Mammary epithelial cell (primary cell): ENCODE measurements at regions of chr2 and their contacts with region 1.

Region 1: GRCh38 chr2:112006076-112006410 is 49.0 kb upstream of the TMEM87B start:
- DNase-seq: peak; percentile 82
- H3K4me3 ChIP-seq: no peak overlapping the region
- H3K27ac ChIP-seq: no peak overlapping the region
- H3K4me1 ChIP-seq: peaks cover 5% of the 10 kb centered on the region
- H3K27me3 ChIP-seq: peaks cover 17% of the 10 kb centered on the region
- CTCF ChIP-seq: no peak

Region 2: DNA sequence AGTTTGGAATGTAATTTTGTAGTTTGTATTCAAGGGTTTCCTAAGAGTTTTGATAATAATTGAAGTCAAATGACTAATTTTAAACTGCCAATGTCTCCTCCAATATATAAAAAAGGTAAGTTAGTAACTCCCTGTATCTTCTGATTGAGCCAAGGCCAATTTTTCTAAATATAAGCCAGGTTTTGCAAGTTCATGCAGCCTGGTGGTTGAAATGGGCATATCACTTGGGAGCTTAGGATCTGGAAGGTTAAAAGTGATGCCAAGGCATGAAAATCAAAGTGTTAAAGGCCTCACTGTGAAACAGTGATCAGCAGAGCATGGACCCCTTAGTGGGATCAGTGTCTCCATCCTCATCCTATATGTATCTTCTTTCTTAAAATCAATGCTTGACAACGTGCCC is 47.1 kb before region 1 on chr2:
- CTCF ChIA-PET with region 1: no interaction called
- dilution Hi-C with region 1: no loop called
- in situ Hi-C with region 1: no loop called
- intact Hi-C with region 1: no loop called
- DNase-seq: no peak
- H3K4me3 ChIP-seq: no peak overlapping the region
- H3K27ac ChIP-seq: no peak overlapping the region
- H3K4me1 ChIP-seq: no peaks in the 10 kb centered on the region
- H3K27me3 ChIP-seq: peaks cover 2% of the 10 kb centered on the region
- CTCF ChIP-seq: peak in 1 of 2 donors; percentile 4

Region 3: DNA sequence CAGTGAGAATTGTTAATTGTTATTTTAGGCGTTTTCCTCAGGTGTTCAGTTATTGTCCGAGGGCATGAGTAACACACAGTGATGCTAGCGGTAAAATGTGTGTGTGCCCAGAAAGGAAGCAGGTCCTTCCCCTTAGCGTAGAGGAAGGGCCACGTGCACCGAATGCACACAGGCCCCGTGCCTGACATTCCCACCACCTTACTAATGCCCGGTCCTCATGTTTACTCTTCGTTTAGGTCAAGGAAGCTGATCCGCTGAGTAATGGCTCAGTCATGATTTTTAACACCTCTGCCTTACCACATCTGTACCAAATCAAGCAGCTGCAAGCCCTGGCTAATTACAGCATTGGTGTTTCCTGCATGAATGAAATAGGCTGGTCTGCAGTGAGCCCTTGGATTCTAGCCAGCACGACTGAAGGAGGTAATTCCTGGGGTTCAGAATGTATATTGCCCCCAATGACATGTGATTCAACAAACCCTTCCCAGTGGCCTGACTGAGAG is 30.9 kb before region 1 on chr2:
- CTCF ChIA-PET with region 1: no interaction called
- dilution Hi-C with region 1: no loop called
- in situ Hi-C with region 1: no loop called
- intact Hi-C with region 1: loop called (anchors 1 kb)
- DNase-seq: peak; percentile 98
- H3K4me3 ChIP-seq: no peak overlapping the region
- H3K27ac ChIP-seq: no peak overlapping the region
- H3K4me1 ChIP-seq: peaks cover 15% of the 10 kb centered on the region
- H3K27me3 ChIP-seq: peaks cover 11% of the 10 kb centered on the region
- CTCF ChIP-seq: no peak

Region 4: GRCh38 chr2:112032689-112033465 is 26.8 kb after region 1 on chr2:
- CTCF ChIA-PET with region 1: no interaction called
- dilution Hi-C with region 1: no loop called
- in situ Hi-C with region 1: no loop called
- intact Hi-C with region 1: loop called (anchors 2 kb)
- DNase-seq: peak; percentile 91
- H3K4me3 ChIP-seq: no peak overlapping the region
- H3K27ac ChIP-seq: peak overlapping the region; percentile 17
- H3K4me1 ChIP-seq: peaks cover 29% of the 10 kb centered on the region
- H3K27me3 ChIP-seq: no peaks in the 10 kb centered on the region
- CTCF ChIP-seq: peak in 1 of 2 donors; percentile 16